HEK293 (cell line): ENCODE measurements at regions of chr1 and their contacts with region 1.

Region 1: DNA sequence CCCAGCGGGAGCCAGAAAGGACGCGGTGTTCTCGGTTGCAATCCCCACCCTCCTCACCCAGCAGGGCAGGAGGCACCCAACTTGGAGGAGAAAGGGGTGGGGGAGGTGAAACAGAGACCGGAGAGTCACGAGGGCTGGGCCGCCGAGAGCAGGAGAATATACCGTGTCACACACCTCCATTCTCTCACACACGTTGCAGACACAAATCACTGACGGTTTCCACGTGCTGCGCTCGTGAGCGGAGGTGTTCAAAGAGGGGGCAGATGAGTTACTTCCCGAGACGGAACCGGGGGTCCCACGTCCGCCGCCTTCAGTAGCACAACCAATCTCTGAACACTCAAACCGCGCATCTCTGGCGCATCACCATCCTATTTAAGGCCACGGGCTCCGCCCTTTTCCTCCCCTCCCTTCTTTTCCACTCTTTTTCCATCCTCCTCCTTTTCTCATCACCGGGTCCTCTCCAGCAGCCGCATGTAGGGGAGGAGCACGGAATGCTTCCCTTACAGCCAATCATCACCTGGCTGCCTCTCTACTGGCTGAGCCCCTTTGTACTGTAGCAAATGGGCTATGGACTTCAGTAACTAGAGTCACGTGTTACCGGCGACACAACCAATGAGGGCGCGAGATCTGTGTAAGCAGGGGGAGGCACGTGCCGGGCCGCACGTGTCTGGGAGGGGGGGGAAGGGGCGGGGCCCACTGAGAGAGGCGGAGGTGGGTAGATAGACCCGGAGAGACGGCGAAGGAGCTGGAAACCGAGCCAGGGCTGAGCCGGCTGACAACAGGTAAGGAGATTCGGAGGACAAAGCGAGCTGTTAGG is at the start of gene CIART:
- H3K4me3 ChIP-seq: peak within 1 kb of the TSS; percentile 28
- H3K27ac ChIP-seq: no peak within 1 kb of the TSS; the same call in 1 of the 2 replicates
- H3K4me1 ChIP-seq: no peaks in the 10 kb centered on the region
- CTCF ChIP-seq: no peak

Region 2: DNA sequence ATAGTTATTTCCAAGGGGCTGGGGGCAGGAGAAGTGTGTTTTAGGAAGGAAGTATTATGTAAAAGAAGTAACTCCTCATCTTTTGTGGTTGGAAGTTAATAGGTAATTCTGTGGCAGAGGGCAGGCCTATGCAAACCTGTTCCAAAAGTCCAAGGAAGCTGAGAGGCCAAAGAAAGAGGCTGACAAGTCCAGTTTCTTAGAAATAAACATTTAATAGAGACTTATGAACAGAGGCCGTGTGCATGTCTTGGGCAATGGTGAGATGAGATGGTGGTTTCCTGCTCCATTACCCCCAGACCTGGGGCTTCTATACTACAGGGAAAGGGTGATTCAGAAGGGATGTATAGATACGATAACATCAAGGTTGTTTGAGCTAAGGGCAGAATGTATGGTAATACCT is 32.1 kb before region 1 on chr1:
- CTCF ChIA-PET with region 1: interaction called, 101 read pairs
- POLR2A ChIA-PET with region 1: no interaction called
- H3K4me3 ChIP-seq: no peak overlapping the region
- H3K27ac ChIP-seq: no peak overlapping the region
- H3K4me1 ChIP-seq: no peaks in the 10 kb centered on the region
- CTCF ChIP-seq: no peak

Region 3: GRCh38 chr1:150268705-150269403 is 13.2 kb before region 1 on chr1 and contains the start of gene APH1A:
- CTCF ChIA-PET with region 1: interaction called, 33 read pairs
- POLR2A ChIA-PET with region 1: interaction called, 8 read pairs
- H3K4me3 ChIP-seq: peak within 1 kb of the TSS; percentile 67
- H3K27ac ChIP-seq: peak within 1 kb of the TSS; percentile 75
- H3K4me1 ChIP-seq: 0 out of 2 replicates have a peak, but pooled peaks cover 7% of the 10 kb centered on the region
- CTCF ChIP-seq: no peak

Region 4: DNA sequence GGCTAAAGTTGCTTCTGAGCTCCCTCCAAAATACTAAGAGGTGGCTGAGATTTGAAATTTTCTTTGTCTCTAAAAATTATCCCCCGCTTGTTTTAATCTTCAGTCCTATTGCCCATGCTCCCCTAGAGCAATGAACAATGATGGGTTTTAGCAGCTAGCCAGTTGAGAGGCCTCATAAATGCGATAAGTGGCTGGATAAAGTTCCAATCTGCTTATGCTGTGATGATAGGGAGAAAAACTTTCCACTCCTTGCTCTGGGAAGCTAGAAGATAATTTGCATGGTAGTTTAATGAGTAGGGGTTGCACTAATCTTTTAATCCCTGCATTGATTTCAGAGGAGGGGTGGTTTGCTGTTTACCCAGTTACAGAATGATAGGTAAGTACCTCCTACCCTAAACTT is 29.7 kb after region 1 on chr1:
- CTCF ChIA-PET with region 1: no interaction called
- POLR2A ChIA-PET with region 1: no interaction called
- H3K4me3 ChIP-seq: no peak overlapping the region
- H3K27ac ChIP-seq: no peak overlapping the region
- H3K4me1 ChIP-seq: no peaks in the 10 kb centered on the region
- CTCF ChIP-seq: no peak